GM10248 (cell line): ENCODE measurements at regions of chr10 and their contacts with region 1.

Region 1: GRCh38 chr10:119207367-119207668 is at the start of gene GRK5:
- DNase-seq: peak; percentile 97
- CTCF ChIP-seq: no peak

Region 2: DNA sequence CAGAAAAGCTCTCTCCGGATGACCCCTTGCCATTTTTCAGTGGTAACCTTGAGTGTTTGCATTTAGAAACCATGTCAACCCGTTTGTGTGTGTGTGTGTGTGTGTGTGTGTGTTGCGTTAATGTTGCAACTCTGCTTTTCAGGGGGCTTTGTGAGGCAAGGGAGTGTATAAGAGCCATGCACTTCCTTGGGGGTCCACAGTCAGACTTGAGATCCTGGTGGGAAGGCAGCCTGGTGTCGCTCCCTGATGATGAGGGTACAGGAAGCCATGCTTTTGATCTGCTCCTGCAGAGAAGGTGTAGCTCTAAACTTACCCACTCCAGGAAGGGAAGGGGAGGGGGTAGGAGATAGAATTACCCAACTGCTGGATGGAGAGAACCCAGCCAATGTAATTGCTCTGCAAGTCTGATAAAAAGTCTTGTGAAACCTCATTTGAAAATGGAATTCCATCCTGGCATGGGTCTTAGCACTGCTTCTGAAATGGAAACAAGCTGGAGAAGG is 10.7 kb after region 1 on chr10:
- CTCF ChIA-PET with region 1: interaction called, 19 read pairs
- POLR2A ChIA-PET with region 1: interaction called, 5 read pairs
- DNase-seq: no peak
- CTCF ChIP-seq: no peak

Region 3: GRCh38 chr10:119253433-119254174 is 46.3 kb after region 1 on chr10:
- CTCF ChIA-PET with region 1: interaction called, 11 read pairs
- POLR2A ChIA-PET with region 1: interaction called, 3 read pairs
- DNase-seq: no peak
- CTCF ChIP-seq: no peak

Region 4: GRCh38 chr10:119281581-119282071 is 74.3 kb after region 1 on chr10:
- CTCF ChIA-PET with region 1: interaction called, 14 read pairs
- POLR2A ChIA-PET with region 1: no interaction called
- DNase-seq: no peak
- CTCF ChIP-seq: no peak

Region 5: DNA sequence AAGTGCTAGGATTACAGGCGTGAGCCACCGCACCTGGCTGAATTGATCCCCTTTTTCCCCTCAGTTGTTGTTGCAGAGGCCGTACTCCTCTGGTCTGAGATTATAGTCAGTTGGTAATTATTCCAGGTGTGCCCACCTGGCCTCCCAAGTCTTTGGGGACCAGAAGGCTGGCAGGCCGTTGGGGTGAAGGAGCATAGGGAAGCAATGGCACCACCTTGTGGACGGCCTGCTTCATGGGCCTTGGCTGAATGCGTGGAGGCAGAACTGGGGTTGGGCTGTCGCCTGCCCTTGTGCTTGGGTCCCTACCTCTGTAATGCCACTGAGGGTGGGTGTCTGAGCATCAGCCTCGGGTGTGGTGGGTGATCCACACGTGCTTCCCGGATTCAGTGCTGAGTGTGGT is 209.5 kb after region 1 on chr10:
- CTCF ChIA-PET with region 1: interaction called, 36 read pairs
- POLR2A ChIA-PET with region 1: no interaction called
- DNase-seq: peak; percentile 91
- CTCF ChIP-seq: peak; percentile 80

Region 6: GRCh38 chr10:119445311-119445934 is 238.1 kb after region 1 on chr10:
- CTCF ChIA-PET with region 1: interaction called, 131 read pairs
- POLR2A ChIA-PET with region 1: no interaction called
- DNase-seq: peak; percentile 89
- CTCF ChIP-seq: peak; percentile 96

Region 7: DNA sequence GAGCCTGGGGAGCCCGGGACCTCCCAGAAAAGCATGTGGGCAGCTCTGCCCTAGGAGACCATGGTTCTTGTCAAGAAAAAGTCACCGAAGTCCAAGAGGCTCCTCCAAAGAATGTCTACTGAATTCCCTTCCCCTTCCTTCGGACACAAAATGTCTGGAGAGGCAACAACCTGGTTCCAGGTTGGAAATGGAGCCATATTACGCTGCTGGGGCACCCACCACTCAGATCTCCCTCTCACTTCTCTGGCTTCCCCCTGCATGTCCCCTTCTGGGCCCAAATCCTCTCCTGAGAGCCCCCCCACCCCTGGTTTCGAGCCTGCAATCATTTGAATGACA is 282.6 kb after region 1 on chr10:
- CTCF ChIA-PET with region 1: interaction called, 15 read pairs
- POLR2A ChIA-PET with region 1: no interaction called
- DNase-seq: no peak
- CTCF ChIP-seq: no peak